MCF 10A (cell line): ENCODE measurements at regions of chr13 and their contacts with region 1.

Region 1: GRCh38 chr13:51797664-51798488 is 6.1 kb downstream of the DHRS12 start:
- DNase-seq: peak; percentile 83
- H3K4me3 Mint-ChIP-seq: no peak overlapping the region
- H3K27ac Mint-ChIP-seq: no peak overlapping the region
- H3K4me1 Mint-ChIP-seq: peaks cover 22% of the 10 kb centered on the region
- H3K27me3 Mint-ChIP-seq: no peaks in the 10 kb centered on the region
- CTCF ChIP-seq: peak; percentile 60

Region 2: DNA sequence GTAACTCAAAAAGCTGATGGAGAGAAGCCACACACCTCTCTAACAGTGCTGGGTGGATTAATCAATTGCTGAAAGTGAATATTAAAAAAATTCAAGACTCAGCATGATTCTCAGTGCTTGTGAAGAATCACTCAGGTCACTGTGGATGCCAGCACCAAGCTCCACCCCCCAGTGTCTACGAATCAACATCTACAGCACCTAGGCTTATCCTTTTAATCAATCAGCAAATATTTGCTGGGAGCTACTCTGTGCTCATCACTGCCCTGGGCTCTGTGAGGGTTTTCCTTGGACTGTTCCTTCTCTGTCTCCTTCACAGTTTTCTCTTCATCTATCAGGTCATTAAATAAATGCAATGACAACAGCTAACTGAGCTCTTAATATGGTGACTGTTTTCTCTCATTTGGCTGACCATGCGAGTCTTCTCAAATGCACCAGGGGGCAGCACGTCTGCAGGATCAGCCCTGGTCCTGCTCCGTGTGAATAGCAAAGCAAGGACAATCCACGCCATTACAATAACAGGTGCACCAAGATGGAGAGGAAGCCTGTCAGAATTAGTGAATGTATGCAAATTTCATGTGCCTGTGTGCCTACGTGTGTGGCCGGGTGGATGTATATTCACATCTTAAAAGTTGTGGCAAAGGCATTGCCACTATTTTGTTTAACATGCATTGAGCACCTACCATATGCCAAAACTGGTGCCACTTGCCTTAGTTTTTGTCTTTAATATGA is 672.2 kb before region 1 on chr13:
- CTCF ChIA-PET with region 1: interaction called, 38 read pairs
- POLR2A ChIA-PET with region 1: no interaction called
- intact Hi-C with region 1: loop called (anchors 1 kb)
- DNase-seq: peak; percentile 70
- H3K4me3 Mint-ChIP-seq: no peak overlapping the region
- H3K27ac Mint-ChIP-seq: no peak overlapping the region
- H3K4me1 Mint-ChIP-seq: no peaks in the 10 kb centered on the region
- H3K27me3 Mint-ChIP-seq: peaks cover 32% of the 10 kb centered on the region
- CTCF ChIP-seq: peak; percentile 76

Region 3: DNA sequence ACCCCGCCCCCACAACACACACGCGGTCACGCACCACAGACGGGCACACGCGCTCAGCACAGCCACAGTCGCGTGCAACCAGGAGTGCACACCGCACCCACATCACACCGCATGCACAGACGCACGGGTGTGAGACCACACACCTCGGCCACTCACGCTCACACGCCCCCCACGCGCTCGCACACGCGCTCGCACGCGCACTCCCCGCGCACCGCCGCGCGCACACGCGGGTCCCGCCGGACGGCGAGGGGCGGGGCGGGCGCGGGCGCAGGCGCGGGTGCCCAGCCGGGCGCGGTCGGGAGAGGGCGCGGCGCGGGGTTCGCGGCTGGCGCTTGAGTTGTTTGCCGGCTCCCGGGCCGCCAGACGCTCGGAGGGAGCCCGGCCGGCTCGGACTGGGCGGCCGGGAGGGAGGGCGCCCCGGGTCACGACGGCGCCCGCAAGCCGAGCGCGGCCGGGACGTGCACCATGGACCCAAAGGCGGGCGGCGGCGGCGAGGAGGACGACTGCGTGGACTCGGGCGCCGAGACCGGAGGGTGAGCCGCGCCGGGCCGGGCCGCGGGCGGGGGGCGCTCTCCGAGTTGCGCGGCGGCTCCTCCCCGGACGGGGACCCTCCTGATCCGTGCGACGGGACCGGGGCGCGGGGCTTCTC is 575.7 kb before region 1 on chr13 and contains the start of gene FAM124A:
- CTCF ChIA-PET with region 1: interaction called, 6 read pairs
- POLR2A ChIA-PET with region 1: no interaction called
- intact Hi-C with region 1: loop called (anchors 2 kb)
- DNase-seq: peak; percentile 53
- H3K4me3 Mint-ChIP-seq: peak within 1 kb of the TSS; percentile 62
- H3K27ac Mint-ChIP-seq: no peak within 1 kb of the TSS
- H3K4me1 Mint-ChIP-seq: peaks cover 6% of the 10 kb centered on the region
- H3K27me3 Mint-ChIP-seq: peaks cover 20% of the 10 kb centered on the region
- CTCF ChIP-seq: peak; percentile 15
- total RNA-seq, gene FAM124A: 0.12 and 0.15 TPM in 2 replicates

Region 4: GRCh38 chr13:51435002-51435578 is 362.8 kb before region 1 on chr13:
- CTCF ChIA-PET with region 1: interaction called, 31 read pairs
- POLR2A ChIA-PET with region 1: interaction called, 8 read pairs
- intact Hi-C with region 1: loop called (anchors 2 kb)
- DNase-seq: peak; percentile 17
- H3K4me3 Mint-ChIP-seq: no peak overlapping the region
- H3K27ac Mint-ChIP-seq: no peak overlapping the region
- H3K4me1 Mint-ChIP-seq: no peaks in the 10 kb centered on the region
- H3K27me3 Mint-ChIP-seq: no peaks in the 10 kb centered on the region
- CTCF ChIP-seq: peak; percentile 43

Region 5: GRCh38 chr13:51583875-51584730 is 213.8 kb before region 1 on chr13 and contains the start of gene WDFY2:
- CTCF ChIA-PET with region 1: interaction called, 19 read pairs
- POLR2A ChIA-PET with region 1: interaction called, 16 read pairs
- intact Hi-C with region 1: loop called (anchors 5 kb)
- DNase-seq: peak; percentile 100
- H3K4me3 Mint-ChIP-seq: peak within 1 kb of the TSS; percentile 88
- H3K27ac Mint-ChIP-seq: peak within 1 kb of the TSS; percentile 85
- H3K4me1 Mint-ChIP-seq: peaks cover 41% of the 10 kb centered on the region
- H3K27me3 Mint-ChIP-seq: no peaks in the 10 kb centered on the region
- CTCF ChIP-seq: no peak
- total RNA-seq, gene WDFY2: 46.7 and 56.2 TPM in 2 replicates

Region 6: DNA sequence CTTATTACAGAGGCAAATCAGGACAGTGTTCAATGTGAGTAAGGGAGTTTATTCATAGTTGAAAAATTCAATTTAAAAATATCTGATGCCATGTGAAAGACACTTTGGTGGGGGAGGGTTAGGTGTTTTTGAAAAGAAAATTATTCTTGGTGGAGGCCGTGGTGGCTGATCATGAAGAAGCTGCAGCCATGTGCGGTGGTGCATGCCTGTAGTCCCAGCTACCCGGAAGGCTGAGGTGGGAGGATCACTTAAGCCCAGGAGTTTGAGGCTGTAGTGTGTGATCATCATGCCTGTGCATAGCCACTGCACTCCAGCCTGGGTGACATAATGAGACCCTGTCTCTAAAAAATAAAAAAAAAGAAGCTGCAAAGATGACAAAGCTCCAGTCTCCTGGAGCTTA is 185.0 kb before region 1 on chr13:
- CTCF ChIA-PET with region 1: interaction called, 10 read pairs
- POLR2A ChIA-PET with region 1: no interaction called
- intact Hi-C with region 1: no loop called
- DNase-seq: no peak
- H3K4me3 Mint-ChIP-seq: no peak overlapping the region
- H3K27ac Mint-ChIP-seq: no peak overlapping the region
- H3K4me1 Mint-ChIP-seq: peaks cover 14% of the 10 kb centered on the region
- H3K27me3 Mint-ChIP-seq: no peaks in the 10 kb centered on the region
- CTCF ChIP-seq: no peak

Region 7: DNA sequence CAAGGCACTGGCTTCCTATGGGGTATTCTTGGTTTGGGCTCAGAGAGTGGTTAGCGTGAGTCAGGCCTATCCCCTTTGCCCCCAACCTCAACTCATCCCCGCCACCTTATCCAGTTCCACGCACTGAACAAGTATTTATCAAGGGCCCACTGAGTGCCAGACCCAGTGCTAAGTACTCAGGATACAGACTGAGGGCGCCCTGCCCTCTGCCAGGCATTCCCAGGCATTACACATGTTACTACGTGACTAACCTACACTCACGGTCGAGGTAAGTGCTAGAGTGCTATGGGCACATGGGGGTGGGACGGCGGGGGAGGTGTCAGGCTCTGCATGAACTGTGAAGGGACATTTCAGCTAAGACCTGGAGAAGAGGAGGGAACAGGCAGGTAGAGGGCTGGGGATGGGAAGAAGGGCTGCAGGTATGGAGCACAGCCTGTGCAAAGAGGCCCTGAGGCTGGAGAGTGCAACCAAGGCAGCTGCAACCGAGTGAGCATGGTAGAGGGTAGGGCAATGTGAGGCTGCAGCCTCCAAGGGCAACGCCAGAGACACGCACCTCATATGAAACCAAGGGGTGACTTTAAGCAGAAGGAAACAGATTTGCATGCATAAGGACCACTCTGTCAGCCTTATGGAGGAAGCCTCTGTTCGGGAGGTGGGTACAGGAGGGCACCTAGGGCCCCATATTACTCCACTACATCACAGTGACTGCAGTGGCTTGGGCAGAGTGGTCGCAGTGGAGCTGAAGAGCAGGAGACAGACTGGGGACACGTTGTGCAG is 16.4 kb before region 1 on chr13:
- CTCF ChIA-PET with region 1: interaction called, 35 read pairs
- POLR2A ChIA-PET with region 1: interaction called, 10 read pairs
- intact Hi-C with region 1: no loop called
- DNase-seq: peak; percentile 70
- H3K4me3 Mint-ChIP-seq: no peak overlapping the region
- H3K27ac Mint-ChIP-seq: peak overlapping the region; percentile 33
- H3K4me1 Mint-ChIP-seq: peaks cover 11% of the 10 kb centered on the region
- H3K27me3 Mint-ChIP-seq: no peaks in the 10 kb centered on the region
- CTCF ChIP-seq: peak; percentile 43

Region 8: DNA sequence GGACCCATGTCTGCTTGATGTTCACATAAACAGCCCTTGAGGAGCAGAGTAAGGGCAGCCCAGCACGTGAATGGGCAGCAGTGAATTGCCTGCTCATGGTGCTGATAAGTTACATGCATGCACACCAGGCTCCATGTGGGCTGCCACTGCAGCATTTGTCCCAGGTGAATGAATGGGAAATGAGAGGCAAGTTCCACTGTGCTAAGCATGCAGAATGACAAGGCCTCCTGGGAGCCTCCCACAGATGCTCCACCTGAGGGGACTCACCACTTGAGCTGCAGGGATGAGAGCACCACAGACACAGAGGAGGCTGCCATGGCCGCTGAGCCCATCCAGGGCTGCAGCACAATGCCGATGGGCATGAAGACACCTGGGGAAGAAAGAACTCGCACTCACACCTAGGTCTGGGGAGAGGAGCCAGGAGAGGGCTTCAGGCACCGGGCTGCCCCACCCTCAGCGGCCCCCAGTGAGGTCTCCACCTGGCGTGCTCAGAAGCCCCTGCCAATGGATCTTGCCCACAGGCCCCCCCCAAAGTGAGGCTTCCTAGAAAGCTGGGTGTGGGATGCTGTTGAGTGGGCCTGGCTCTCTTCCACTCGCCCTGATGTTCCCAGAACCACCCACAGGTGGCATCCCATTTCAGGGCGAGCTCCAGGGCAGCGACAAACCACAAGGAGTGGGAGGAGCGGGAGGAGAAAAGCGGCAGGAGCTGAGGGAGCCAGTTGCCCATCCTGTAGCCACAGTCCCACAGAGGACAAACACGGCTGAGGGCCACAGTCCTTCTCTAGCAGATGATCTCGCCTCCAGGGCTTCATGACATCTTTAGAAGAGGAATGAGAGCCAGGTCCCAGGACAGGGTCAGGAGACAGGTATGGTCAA is 137.7 kb after region 1 on chr13:
- CTCF ChIA-PET with region 1: no interaction called
- POLR2A ChIA-PET with region 1: no interaction called
- intact Hi-C with region 1: no loop called
- DNase-seq: peak; percentile 50
- H3K4me3 Mint-ChIP-seq: no peak overlapping the region
- H3K27ac Mint-ChIP-seq: no peak overlapping the region
- H3K4me1 Mint-ChIP-seq: no peaks in the 10 kb centered on the region
- H3K27me3 Mint-ChIP-seq: no peaks in the 10 kb centered on the region
- CTCF ChIP-seq: peak; percentile 29